WTC11 (cell line): ENCODE measurements at regions of chr9 and their contacts with region 1.

Region 1: DNA sequence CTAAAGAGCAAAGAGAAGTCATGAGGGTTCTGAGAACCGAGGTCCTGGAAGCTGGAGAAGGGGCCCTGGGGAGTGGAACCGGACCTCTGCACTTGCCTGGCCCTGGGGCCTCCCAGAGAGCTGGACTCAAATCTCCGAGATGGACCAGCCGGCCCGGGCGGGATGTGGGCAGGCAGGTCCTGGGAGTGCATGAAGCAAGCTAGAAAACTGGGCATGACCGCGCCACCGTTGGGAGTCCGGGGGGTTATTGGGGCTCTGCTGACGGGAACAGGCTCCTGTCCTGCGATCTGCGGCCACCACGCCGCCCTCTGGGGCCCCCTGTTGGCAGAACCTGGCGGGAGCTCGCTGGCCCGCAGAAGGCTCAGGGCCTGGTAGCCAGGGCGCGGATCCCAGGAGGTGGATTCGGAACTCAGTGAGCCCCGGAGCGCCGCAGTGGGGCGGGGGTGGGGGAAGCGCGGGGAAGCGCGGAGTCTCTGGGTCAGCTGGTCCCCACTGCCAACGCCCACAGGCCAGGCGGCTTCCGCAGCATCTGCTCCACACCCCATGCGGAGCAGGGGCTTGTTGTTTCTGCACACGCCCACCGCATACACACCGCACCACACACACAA is 150.6 kb downstream of the ERCC6L2 start:
- DNase-seq: peak; percentile 86
- ATAC-seq: peak; percentile 51
- H3K4me3 Mint-ChIP-seq: peak overlapping the region; percentile 38
- H3K27ac Mint-ChIP-seq: no peak overlapping the region
- H3K4me1 Mint-ChIP-seq: peaks cover 20% of the 10 kb centered on the region
- H3K27me3 Mint-ChIP-seq: peaks cover 83% of the 10 kb centered on the region
- CTCF ChIP-seq: peak; percentile 48; the same call in 1 of the 2 replicates

Region 2: GRCh38 chr9:95938724-95939123 is 87.4 kb before region 1 on chr9:
- CTCF ChIA-PET with region 1: no interaction called
- POLR2A ChIA-PET with region 1: no interaction called
- DNase-seq: no peak
- ATAC-seq: no peak
- H3K4me3 Mint-ChIP-seq: no peak overlapping the region
- H3K27ac Mint-ChIP-seq: no peak overlapping the region
- H3K4me1 Mint-ChIP-seq: peaks cover 18% of the 10 kb centered on the region
- H3K27me3 Mint-ChIP-seq: no peaks in the 10 kb centered on the region
- CTCF ChIP-seq: no peak

Region 3: GRCh38 chr9:95999390-95999789 is 26.7 kb before region 1 on chr9:
- CTCF ChIA-PET with region 1: no interaction called
- POLR2A ChIA-PET with region 1: no interaction called
- DNase-seq: no peak
- ATAC-seq: no peak
- H3K4me3 Mint-ChIP-seq: no peak overlapping the region
- H3K27ac Mint-ChIP-seq: no peak overlapping the region
- H3K4me1 Mint-ChIP-seq: peaks cover 8% of the 10 kb centered on the region
- H3K27me3 Mint-ChIP-seq: no peaks in the 10 kb centered on the region
- CTCF ChIP-seq: no peak

Region 4: DNA sequence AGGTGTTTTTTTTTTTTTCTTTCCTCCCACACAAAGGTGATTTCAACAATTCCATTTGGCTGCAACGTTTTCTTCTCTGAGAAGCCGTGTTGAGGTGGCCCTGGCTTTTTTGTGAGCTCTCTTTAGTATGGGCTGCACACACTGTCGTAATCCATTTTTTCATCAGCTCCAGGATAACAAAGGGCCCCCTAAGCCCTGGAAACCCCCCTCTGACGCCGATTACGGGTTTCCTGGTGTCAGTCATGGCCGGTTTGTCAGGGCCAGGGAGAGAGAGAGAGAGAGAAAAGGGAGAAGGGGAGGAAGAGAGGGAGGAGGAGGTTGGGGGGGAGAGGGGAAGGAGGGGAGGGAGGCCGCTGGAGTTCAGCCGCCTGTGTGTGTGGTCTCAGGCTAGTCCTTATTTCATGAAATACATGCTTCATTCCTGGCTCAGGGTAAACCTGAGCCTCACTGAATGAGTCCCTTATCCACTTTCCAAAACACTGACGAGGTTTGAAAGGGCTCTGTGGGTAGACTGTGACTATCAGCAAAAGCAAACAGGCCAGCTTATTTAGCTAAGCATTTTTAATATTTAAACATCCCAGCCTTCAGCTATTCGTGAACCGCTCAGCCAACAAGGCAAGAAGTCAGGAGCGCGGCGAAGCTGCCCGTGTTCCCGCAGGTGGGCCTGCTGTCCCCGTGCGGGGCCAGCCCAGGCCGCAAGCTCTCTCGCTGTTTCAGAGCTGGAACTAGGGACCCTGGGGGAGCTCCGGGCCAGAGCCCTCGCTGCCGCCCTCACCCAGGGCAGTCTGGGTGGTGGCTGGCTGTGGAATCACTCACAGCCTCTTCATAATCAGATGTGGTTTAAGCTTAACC is 22.2 kb after region 1 on chr9:
- CTCF ChIA-PET with region 1: interaction called, 13 read pairs
- POLR2A ChIA-PET with region 1: no interaction called
- DNase-seq: no peak
- ATAC-seq: peak; percentile 72
- H3K4me3 Mint-ChIP-seq: no peak overlapping the region
- H3K27ac Mint-ChIP-seq: no peak overlapping the region
- H3K4me1 Mint-ChIP-seq: peaks cover 36% of the 10 kb centered on the region
- H3K27me3 Mint-ChIP-seq: peaks cover 6% of the 10 kb centered on the region; the same call in 1 of the 2 replicates
- CTCF ChIP-seq: no peak

Region 5: GRCh38 chr9:96193236-96193755 is 167.2 kb after region 1 on chr9:
- CTCF ChIA-PET with region 1: no interaction called
- POLR2A ChIA-PET with region 1: no interaction called
- DNase-seq: no peak
- ATAC-seq: peak; percentile 52
- H3K4me3 Mint-ChIP-seq: no peak overlapping the region
- H3K27ac Mint-ChIP-seq: no peak overlapping the region
- H3K4me1 Mint-ChIP-seq: peaks cover 5% of the 10 kb centered on the region; the same call in 1 of the 2 replicates
- H3K27me3 Mint-ChIP-seq: peaks cover 9% of the 10 kb centered on the region
- CTCF ChIP-seq: no peak